Activated CD4-positive, alpha-beta T cell treated with anti-CD3 and anti-CD28 coated beads for 36 hours (primary cell): ENCODE measurements at regions of chr11 and their contacts with region 1.

Region 1: DNA sequence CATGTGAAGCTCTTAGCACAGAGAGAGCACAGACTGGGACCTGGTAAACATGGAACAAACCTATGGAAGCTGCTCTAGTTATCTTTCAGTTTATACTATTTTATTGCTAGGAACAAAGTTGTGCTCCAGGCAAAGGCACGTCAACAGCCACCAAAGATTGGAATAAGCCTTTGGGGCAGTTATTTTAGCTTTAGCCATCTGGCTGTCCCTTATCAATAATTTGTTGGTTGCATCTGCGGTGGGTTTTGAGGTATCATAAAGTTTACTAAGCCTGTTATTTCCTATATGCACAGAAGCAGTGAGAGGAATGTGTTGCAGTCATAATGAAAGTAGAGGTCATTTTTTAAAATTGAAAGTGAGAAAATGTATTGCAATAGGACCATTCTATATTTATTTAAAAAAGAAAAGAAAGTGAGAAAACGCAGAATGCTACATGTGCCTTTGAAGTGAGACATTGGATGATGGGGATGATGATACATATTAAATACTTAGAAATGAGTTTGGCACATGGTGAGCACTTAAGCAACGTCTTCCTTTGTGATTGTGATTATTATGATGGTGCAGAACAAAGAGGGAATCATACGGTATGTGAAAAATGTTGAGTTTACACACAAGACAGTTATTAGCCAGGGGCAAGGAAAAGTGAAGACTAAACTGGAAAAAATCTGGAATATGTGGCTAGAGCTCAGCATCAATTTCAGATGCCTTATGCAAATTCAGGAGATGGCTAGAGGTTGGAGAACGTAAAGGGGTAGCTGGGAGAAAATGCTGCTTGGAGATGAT is 58.3 kb downstream of the PRR5L start:
- DNase-seq: no peak
- ATAC-seq: peak; percentile 54
- H3K4me3 Mint-ChIP-seq: peak overlapping the region; percentile 28
- H3K27ac Mint-ChIP-seq: peak overlapping the region; percentile 77
- H3K4me1 Mint-ChIP-seq: peaks cover 73% of the 10 kb centered on the region
- H3K27me3 Mint-ChIP-seq: peaks cover 6% of the 10 kb centered on the region

Region 2: DNA sequence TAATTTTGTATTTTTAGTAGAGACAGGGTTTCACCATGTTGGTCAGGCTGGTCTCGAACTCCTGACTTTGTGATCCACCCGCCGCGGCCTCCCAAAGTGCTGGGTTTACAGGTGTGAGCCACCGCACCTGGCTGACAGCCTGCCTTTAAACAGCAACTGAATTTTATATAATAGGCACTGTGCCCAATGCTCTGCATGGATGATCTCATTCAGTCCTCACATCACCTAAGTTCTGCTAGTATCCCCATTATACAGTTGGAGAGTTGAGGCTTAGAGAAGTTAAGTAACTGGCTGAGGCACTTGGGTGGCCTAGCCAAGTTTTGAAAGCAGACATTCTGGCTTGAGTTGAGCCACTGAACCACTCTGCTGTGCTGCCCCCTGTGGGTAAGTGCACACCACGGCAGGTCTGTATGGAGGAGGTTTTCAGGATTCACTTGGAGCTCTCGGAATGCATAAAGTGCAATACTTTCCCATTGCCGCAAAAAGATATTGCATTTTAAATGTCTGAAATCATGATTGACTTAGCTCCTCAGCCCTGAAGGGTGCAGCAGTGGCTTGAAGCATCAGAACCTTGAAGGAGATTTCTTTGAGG is 298.2 kb before region 1 on chr11:
- CTCF ChIA-PET with region 1: no interaction called
- POLR2A ChIA-PET with region 1: no interaction called
- intact Hi-C with region 1: no loop called
- DNase-seq: peak; percentile 19
- ATAC-seq: no peak
- H3K4me3 Mint-ChIP-seq: no peak overlapping the region
- H3K27ac Mint-ChIP-seq: no peak overlapping the region
- H3K4me1 Mint-ChIP-seq: no peaks in the 10 kb centered on the region
- H3K27me3 Mint-ChIP-seq: no peaks in the 10 kb centered on the region

Region 3: DNA sequence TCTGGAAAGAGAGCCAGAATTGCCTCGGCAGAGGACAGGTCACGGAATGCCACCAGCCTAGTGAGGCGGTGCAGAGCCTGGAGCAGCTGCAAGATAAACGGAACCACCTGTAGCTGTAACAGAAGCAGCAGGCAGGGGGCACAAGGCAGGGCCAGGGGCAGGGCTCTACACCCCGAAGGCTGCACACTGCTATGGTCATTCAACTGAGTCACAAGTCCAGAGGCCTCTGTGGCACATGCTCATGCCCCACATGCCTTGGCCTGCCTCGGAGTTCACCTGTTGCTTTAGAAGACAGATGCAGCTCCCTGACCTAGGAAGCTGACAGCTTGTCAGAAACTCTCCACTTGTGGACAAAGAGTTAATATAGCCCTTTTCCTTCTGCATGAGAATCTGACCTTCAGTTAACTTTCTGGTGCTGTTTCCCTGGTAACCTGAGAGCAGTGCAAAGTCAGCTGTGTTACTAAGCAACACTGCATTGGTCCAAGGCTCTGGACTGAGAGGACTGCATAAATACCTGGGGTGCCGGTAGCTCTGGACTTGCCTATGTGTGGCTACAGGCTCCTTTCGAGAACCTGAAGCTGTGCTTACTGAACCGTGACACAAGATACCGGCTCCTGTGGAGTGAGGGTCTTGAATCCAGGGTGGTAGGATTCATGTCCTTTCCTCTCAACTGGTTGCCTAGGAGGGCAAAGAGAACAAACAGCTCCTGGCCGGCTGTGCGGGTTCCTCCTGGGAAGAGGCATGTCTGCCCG is 75.7 kb before region 1 on chr11:
- CTCF ChIA-PET with region 1: no interaction called
- POLR2A ChIA-PET with region 1: no interaction called
- intact Hi-C with region 1: no loop called
- DNase-seq: no peak
- ATAC-seq: no peak
- H3K4me3 Mint-ChIP-seq: no peak overlapping the region
- H3K27ac Mint-ChIP-seq: no peak overlapping the region
- H3K4me1 Mint-ChIP-seq: peaks cover 2% of the 10 kb centered on the region
- H3K27me3 Mint-ChIP-seq: no peaks in the 10 kb centered on the region

Region 4: GRCh38 chr11:36306888-36307287 is 47.5 kb before region 1 on chr11:
- CTCF ChIA-PET with region 1: no interaction called
- POLR2A ChIA-PET with region 1: no interaction called
- intact Hi-C with region 1: loop called in 1 of 2 experiments (anchors 2 kb)
- DNase-seq: peak; percentile 64
- ATAC-seq: peak; percentile 53
- H3K4me3 Mint-ChIP-seq: no peak overlapping the region
- H3K27ac Mint-ChIP-seq: no peak overlapping the region
- H3K4me1 Mint-ChIP-seq: peaks cover 12% of the 10 kb centered on the region
- H3K27me3 Mint-ChIP-seq: peaks cover 13% of the 10 kb centered on the region

Region 5: DNA sequence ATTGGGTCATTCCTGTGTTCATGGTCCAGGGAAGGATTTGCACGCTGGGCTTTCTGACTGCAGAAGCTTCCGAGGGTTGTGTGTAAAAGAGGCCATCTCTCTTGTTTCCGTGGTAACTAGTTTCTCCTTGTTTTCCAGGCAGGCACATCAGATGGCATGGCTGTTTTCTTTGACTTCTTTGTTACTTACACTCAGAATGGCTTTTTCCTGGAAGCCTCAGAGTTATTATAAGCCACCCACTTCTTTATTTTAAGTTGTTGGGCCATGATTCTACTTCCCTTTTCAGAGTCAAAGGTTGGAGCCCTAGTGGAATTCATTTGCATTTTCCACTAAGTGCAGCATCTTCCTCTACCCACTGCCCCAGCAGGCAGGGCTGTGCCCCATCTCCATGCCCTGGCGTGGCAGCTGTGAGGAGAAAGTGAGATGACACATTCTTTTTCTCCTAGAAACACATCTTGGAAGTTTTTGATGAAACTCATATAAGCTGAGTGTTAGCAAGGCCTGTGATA is 36.6 kb after region 1 on chr11:
- CTCF ChIA-PET with region 1: no interaction called
- POLR2A ChIA-PET with region 1: no interaction called
- intact Hi-C with region 1: loop called in 1 of 2 experiments (anchors 5 kb)
- DNase-seq: peak; percentile 61
- ATAC-seq: peak; percentile 58
- H3K4me3 Mint-ChIP-seq: no peak overlapping the region
- H3K27ac Mint-ChIP-seq: peak overlapping the region; percentile 58
- H3K4me1 Mint-ChIP-seq: peaks cover 57% of the 10 kb centered on the region
- H3K27me3 Mint-ChIP-seq: no peaks in the 10 kb centered on the region

Region 6: GRCh38 chr11:36409152-36409816 is 54.9 kb after region 1 on chr11:
- CTCF ChIA-PET with region 1: interaction called, 3 read pairs
- POLR2A ChIA-PET with region 1: no interaction called
- intact Hi-C with region 1: loop called in 1 of 2 experiments (anchors 1 kb)
- DNase-seq: peak; percentile 61
- ATAC-seq: peak; percentile 83
- H3K4me3 Mint-ChIP-seq: peak overlapping the region; percentile 17
- H3K27ac Mint-ChIP-seq: peak overlapping the region; percentile 91
- H3K4me1 Mint-ChIP-seq: peaks cover 59% of the 10 kb centered on the region
- H3K27me3 Mint-ChIP-seq: no peaks in the 10 kb centered on the region

Region 7: GRCh38 chr11:36421546-36422155 is 67.2 kb after region 1 on chr11:
- CTCF ChIA-PET with region 1: interaction called, 6 read pairs
- POLR2A ChIA-PET with region 1: no interaction called
- intact Hi-C with region 1: loop called in 1 of 2 experiments (anchors 1 kb)
- DNase-seq: no peak
- ATAC-seq: no peak
- H3K4me3 Mint-ChIP-seq: peak overlapping the region; percentile 41
- H3K27ac Mint-ChIP-seq: peak overlapping the region; percentile 94
- H3K4me1 Mint-ChIP-seq: peaks cover 54% of the 10 kb centered on the region
- H3K27me3 Mint-ChIP-seq: peaks cover 7% of the 10 kb centered on the region

Region 8: GRCh38 chr11:36478700-36479329 is 124.4 kb after region 1 on chr11:
- CTCF ChIA-PET with region 1: interaction called, 16 read pairs
- POLR2A ChIA-PET with region 1: no interaction called
- intact Hi-C with region 1: loop called (anchors 5 kb)
- DNase-seq: peak; percentile 54
- ATAC-seq: peak; percentile 44
- H3K4me3 Mint-ChIP-seq: no peak overlapping the region
- H3K27ac Mint-ChIP-seq: no peak overlapping the region
- H3K4me1 Mint-ChIP-seq: peaks cover 6% of the 10 kb centered on the region
- H3K27me3 Mint-ChIP-seq: no peaks in the 10 kb centered on the region

Region 9: DNA sequence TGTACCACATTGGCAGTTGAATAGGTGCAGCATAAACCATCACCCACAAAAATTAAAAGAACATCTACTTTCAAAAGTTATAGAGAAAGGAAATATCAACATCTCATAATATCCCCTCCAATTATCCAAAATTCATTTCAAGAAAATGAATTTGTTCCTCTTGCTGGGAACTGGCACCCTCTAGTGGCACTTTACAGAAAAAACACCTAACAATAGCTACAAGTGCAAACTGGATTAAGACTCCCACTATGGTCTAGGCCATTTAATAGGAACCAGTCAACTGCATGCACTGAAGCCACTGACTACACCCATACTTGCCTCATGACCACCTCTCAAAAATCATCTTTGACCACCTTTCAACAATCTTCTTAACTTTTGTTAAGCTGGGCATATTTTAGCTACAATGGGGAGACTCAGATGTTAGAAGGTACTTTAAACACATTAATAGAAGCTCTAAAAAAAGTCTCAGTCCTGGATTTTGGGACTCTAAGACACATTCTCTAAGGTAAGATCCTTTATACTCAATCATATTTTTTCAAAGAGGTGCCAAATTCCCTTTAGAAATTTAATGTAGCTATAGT is 138.4 kb after region 1 on chr11:
- CTCF ChIA-PET with region 1: interaction called, 19 read pairs
- POLR2A ChIA-PET with region 1: no interaction called
- intact Hi-C with region 1: loop called (anchors 2 kb)
- DNase-seq: peak; percentile 41
- ATAC-seq: peak; percentile 74
- H3K4me3 Mint-ChIP-seq: no peak overlapping the region
- H3K27ac Mint-ChIP-seq: peak overlapping the region; percentile 24
- H3K4me1 Mint-ChIP-seq: peaks cover 23% of the 10 kb centered on the region
- H3K27me3 Mint-ChIP-seq: no peaks in the 10 kb centered on the region

Region 10: DNA sequence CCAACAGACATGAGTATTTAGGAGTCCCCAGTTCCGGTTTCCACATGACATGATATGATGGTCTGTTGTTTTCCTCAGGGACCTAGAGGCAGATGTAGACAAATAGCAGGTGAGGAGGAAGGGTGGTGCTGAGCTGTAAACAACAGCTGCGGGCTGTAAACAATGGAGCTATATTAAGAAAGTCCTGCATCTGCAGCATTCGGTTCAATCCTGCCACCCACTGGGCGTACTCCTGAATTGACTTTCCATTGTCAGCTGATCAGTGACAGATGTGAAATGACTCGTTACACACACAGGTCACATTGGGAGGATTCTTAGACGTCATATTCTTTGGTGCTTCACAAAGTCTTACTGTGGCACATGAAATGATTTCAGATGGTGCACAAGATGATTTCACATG is 186.6 kb after region 1 on chr11:
- CTCF ChIA-PET with region 1: no interaction called
- POLR2A ChIA-PET with region 1: no interaction called
- intact Hi-C with region 1: no loop called
- DNase-seq: peak; percentile 65
- ATAC-seq: peak; percentile 87
- H3K4me3 Mint-ChIP-seq: no peak overlapping the region
- H3K27ac Mint-ChIP-seq: no peak overlapping the region
- H3K4me1 Mint-ChIP-seq: no peaks in the 10 kb centered on the region
- H3K27me3 Mint-ChIP-seq: peaks cover 2% of the 10 kb centered on the region

Region 11: DNA sequence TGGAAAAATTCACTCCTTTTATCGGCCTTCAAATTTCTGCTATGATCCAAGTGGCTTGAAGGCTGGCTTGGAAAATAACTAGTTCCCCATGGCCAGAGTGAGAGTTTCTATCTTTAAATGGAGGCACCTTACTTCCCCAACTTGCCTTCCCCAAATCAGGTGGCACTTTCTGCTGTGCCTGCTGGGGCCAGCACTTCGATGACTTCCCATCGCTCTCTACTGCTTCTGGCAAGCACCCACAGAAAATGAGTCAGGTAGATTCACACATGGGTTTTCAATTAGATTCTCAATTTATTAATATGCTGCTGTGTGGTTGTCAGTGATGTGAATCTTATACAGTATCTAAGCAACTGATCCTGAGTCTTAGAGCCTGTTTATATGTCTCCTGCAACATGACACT is 642.4 kb after region 1 on chr11:
- CTCF ChIA-PET with region 1: no interaction called
- POLR2A ChIA-PET with region 1: no interaction called
- intact Hi-C with region 1: no loop called
- DNase-seq: no peak
- ATAC-seq: no peak
- H3K4me3 Mint-ChIP-seq: no peak overlapping the region
- H3K27ac Mint-ChIP-seq: no peak overlapping the region
- H3K4me1 Mint-ChIP-seq: no peaks in the 10 kb centered on the region
- H3K27me3 Mint-ChIP-seq: no peaks in the 10 kb centered on the region